H1 (cell line): ENCODE measurements at regions of chr5 and their contacts with region 1.

Region 1: DNA sequence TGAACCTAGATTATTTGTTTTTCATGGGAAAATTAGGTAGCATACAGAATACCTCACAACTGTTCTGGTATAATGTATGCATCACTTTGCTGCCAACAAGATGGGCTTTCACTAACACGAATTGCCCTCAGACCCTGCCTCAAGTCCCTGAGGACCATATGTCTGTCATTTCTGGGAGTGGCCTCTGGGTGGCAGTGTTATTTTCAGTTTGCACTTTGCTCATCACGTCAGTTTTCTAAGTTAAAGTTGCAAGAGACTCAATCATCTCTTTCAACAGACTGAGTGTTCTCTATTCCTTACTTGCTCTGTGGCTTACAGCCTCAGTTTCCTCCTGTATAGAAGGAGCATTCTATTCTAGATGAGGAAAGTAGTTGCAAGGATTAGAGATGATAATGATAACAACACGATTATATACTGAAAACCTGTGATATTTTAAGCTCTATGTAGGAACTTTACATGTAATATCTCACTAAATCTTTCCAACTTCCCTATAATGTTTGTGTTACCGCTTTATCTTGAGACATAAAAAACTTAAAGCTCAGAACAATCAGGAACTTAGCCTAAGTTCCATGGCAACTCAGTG is 55.7 kb downstream of the TSSK1B start:
- DNase-seq: peak; percentile 44 to 76
- H3K4me3 ChIP-seq: no peak overlapping the region
- H3K27ac ChIP-seq: no peak overlapping the region
- H3K4me1 ChIP-seq: peaks cover 0 to 2% (median under 1%) of the 10 kb centered on the region in 4 experiments; a peak in 2 of 7 replicates
- H3K27me3 ChIP-seq: no peaks in the 10 kb centered on the region
- CTCF ChIP-seq: peak; percentile 49 to 86 (median 70)
- EP300 ChIP-seq: no peak
- POLR2A ChIP-seq: no peak
- RAD21 ChIP-seq: peak; percentile 81 to 83

Region 2: DNA sequence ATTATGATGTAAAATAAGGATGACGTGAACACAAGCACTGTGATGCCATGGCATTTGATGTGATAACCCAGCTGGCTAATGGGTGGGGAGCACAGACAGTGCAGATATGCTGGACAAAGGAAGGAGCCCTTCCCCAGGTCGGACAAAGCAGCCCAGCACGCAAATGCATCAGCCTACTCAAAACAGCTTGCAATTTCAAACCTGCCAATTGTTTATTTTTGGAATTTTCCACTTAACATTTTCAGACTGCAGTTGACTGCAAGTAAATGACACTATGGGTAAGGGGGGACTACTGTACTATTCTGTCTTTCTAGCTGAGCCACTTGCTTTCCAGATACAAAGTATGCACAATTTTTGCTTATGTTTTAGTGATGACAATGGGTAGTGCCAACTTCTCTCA is 221.1 kb before region 1 on chr5:
- CTCF ChIA-PET with region 1: no interaction called
- POLR2A ChIA-PET with region 1: no interaction called
- DNase-seq: peak in 1 of 2 experiments; percentile 14
- H3K4me3 ChIP-seq: no peak overlapping the region
- H3K27ac ChIP-seq: no peak overlapping the region
- H3K4me1 ChIP-seq: peaks cover 0 to 9% (median 0%) of the 10 kb centered on the region in 4 experiments; a peak in 3 of 7 replicates
- H3K27me3 ChIP-seq: peaks cover 0 to 1% (median 0%) of the 10 kb centered on the region in 4 experiments; a peak in 1 of 7 replicates
- CTCF ChIP-seq: no peak
- EP300 ChIP-seq: no peak
- POLR2A ChIP-seq: no peak
- RAD21 ChIP-seq: no peak

Region 3: GRCh38 chr5:113357696-113358476 is 21.2 kb before region 1 on chr5:
- CTCF ChIA-PET with region 1: interaction called, 12 read pairs
- POLR2A ChIA-PET with region 1: no interaction called
- DNase-seq: no peak
- H3K4me3 ChIP-seq: no peak overlapping the region
- H3K27ac ChIP-seq: no peak overlapping the region
- H3K4me1 ChIP-seq: no peaks in the 10 kb centered on the region
- H3K27me3 ChIP-seq: no peaks in the 10 kb centered on the region
- CTCF ChIP-seq: no peak
- EP300 ChIP-seq: no peak
- POLR2A ChIP-seq: no peak
- RAD21 ChIP-seq: no peak

Region 4: GRCh38 chr5:113390224-113390623 is 11.2 kb after region 1 on chr5:
- CTCF ChIA-PET with region 1: interaction called, 47 read pairs
- POLR2A ChIA-PET with region 1: no interaction called
- DNase-seq: no peak
- H3K4me3 ChIP-seq: no peak overlapping the region
- H3K27ac ChIP-seq: no peak overlapping the region
- H3K4me1 ChIP-seq: no peaks in the 10 kb centered on the region
- H3K27me3 ChIP-seq: no peaks in the 10 kb centered on the region
- CTCF ChIP-seq: no peak
- EP300 ChIP-seq: no peak
- POLR2A ChIP-seq: no peak
- RAD21 ChIP-seq: no peak

Region 5: GRCh38 chr5:113397046-113397445 is 18.0 kb after region 1 on chr5:
- CTCF ChIA-PET with region 1: interaction called, 47 read pairs
- POLR2A ChIA-PET with region 1: no interaction called
- DNase-seq: no peak
- H3K4me3 ChIP-seq: no peak overlapping the region
- H3K27ac ChIP-seq: no peak overlapping the region
- H3K4me1 ChIP-seq: no peaks in the 10 kb centered on the region
- H3K27me3 ChIP-seq: no peaks in the 10 kb centered on the region
- CTCF ChIP-seq: no peak
- EP300 ChIP-seq: no peak
- POLR2A ChIP-seq: no peak
- RAD21 ChIP-seq: no peak

Region 6: DNA sequence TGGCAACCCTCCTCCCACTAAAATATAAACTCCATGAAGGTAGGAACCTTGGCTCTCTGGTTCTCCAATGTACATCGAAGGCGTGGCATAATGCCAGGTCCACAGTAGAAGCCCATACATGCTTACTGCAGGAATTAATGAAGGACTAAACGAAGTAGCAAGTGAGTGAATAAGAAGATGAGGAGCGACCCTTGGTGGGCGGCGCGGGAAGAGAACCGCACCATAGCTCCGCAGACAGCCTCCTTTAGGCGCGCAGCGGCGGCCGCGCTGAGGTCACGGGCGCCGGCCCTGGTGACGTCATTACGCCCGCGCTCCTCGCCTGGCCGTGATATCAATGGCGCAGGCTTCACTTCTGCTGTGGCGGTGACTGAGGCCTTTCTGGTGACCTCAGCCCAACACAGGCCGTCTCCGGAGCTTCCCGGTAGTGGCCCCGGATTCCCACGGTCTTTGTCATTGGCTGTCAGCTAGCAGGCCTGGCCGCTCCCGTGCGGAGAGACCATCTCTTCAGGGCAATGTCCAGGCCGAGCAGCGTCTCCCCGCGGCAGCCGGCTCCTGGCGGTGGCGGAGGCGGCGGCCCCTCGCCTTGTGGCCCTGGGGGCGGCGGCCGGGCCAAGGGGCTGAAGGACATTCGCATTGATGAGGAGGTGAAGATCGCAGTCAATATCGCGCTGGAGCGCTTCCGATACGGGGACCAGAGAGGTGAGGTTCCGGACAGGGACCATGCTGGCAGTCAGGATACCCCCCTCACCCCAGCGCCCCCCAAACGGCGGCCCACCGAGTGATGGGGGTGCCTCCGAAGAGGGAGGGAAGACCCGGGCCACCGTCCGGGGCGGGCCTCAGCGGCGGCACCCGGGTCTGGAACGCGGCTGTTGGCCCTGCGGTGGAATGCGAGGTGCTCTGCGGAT is 134.6 kb after region 1 on chr5 and contains the start of gene YTHDC2:
- CTCF ChIA-PET with region 1: interaction called, 37 read pairs
- POLR2A ChIA-PET with region 1: no interaction called
- DNase-seq: peak; percentile 51 to 91
- H3K4me3 ChIP-seq: peak within 1 kb of the TSS; percentile 55 to 78 (median 72)
- H3K27ac ChIP-seq: peak within 1 kb of the TSS; percentile 62; the same call in 1 of the 2 replicates
- H3K4me1 ChIP-seq: peaks cover 0 to 5% (median 2%) of the 10 kb centered on the region in 4 experiments; a peak in 3 of 7 replicates
- H3K27me3 ChIP-seq: no peaks in the 10 kb centered on the region
- CTCF ChIP-seq: peak; percentile 59 to 79 (median 66)
- EP300 ChIP-seq: no peak
- POLR2A ChIP-seq: peak; percentile 55 to 89
- RAD21 ChIP-seq: peak; percentile 84 to 85
- total RNA-seq, gene YTHDC2: 19.2 and 20.1 TPM in 2 replicates

Region 7: GRCh38 chr5:113606298-113607134 is 227.5 kb after region 1 on chr5:
- CTCF ChIA-PET with region 1: interaction called, 13 read pairs
- POLR2A ChIA-PET with region 1: no interaction called
- DNase-seq: peak; percentile 23 to 73
- H3K4me3 ChIP-seq: no peak overlapping the region
- H3K27ac ChIP-seq: no peak overlapping the region
- H3K4me1 ChIP-seq: no peaks in the 10 kb centered on the region; a peak in 2 of 7 replicates
- H3K27me3 ChIP-seq: no peaks in the 10 kb centered on the region
- CTCF ChIP-seq: peak; percentile 49 to 86 (median 86)
- EP300 ChIP-seq: no peak
- POLR2A ChIP-seq: no peak
- RAD21 ChIP-seq: peak; percentile 97